ENCODE measurements at regions of chr1 and their contacts with region 1.

Region 1: DNA sequence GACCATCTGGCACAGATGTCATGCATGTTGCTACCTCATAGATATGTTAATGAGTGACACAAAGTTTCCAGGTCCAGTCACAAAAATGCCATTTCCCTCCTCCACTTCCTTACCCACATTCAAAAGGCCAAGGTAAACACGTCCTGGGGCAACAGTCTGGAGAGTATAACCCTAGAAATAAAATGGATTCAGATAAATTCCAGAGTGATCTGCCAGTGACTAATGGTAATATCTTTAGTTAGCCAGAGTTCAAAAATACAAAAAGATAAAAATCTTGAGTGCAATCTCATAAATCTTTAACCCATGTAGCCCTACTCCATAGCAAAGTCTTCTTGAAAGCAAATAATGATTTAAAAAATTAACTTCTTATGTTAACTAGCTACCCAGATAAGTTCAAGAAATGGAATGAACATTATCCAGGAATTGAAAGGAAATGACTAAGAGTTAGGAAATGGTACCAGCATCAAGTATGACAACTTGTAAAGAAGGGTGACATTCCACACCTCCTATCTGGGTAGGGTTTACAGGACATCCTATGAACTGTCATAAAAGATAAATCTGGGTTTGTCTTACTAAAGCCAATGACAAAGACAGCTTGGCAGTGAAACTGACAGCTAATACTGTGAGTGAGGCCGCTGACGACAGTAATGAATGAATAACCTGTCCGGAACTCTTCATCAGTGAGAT is 18.1 kb downstream of the RGS2 start:
- DNase-seq: peak; percentile 85
- H3K4me3 ChIP-seq: no peak overlapping the region
- H3K27ac ChIP-seq: peak overlapping the region; percentile 56
- H3K4me1 ChIP-seq: peaks cover 22% of the 10 kb centered on the region
- H3K27me3 ChIP-seq: no peaks in the 10 kb centered on the region
- CTCF ChIP-seq: no peak
- POLR2A ChIP-seq: no peak

Region 2: DNA sequence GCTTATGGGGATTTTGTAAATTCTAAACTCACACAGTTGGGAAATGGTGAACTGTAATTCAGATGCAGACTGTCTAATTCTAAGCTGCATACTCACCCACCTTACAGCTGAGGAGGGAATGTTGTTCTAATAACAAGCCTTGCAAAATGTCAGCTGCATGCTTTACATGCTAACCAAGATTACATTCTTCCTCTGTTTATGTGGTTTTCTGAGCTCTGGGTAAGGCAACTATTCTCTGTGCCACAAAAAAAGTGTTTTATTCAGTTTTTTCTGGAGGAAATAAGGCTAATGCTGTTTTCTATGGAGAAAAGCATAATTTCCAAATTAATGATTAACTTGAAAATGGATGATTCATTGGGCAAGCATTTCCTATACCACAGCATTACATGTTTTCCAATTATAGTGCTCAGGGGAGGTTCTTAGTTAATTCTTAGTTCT is 126.1 kb before region 1 on chr1:
- CTCF ChIA-PET with region 1: no interaction called
- POLR2A ChIA-PET with region 1: no interaction called
- dilution Hi-C with region 1: no loop called
- intact Hi-C with region 1: loop called (anchors 5 kb)
- DNase-seq: peak; percentile 74
- H3K4me3 ChIP-seq: no peak overlapping the region
- H3K27ac ChIP-seq: peak overlapping the region; percentile 57
- H3K4me1 ChIP-seq: peaks cover 26% of the 10 kb centered on the region
- H3K27me3 ChIP-seq: no peaks in the 10 kb centered on the region
- CTCF ChIP-seq: no peak
- POLR2A ChIP-seq: no peak

Region 3: GRCh38 chr1:192846950-192847349 is 20.0 kb after region 1 on chr1:
- CTCF ChIA-PET with region 1: no interaction called
- POLR2A ChIA-PET with region 1: no interaction called
- dilution Hi-C with region 1: no loop called
- intact Hi-C with region 1: loop called (anchors 1 kb)
- DNase-seq: no peak
- H3K4me3 ChIP-seq: no peak overlapping the region
- H3K27ac ChIP-seq: no peak overlapping the region
- H3K4me1 ChIP-seq: no peaks in the 10 kb centered on the region
- H3K27me3 ChIP-seq: no peaks in the 10 kb centered on the region
- CTCF ChIP-seq: no peak
- POLR2A ChIP-seq: no peak

Measured in endothelial cell of umbilical vein (primary cell).